ENCODE measurements at regions of chr18 and their contacts with region 1.

Region 1: DNA sequence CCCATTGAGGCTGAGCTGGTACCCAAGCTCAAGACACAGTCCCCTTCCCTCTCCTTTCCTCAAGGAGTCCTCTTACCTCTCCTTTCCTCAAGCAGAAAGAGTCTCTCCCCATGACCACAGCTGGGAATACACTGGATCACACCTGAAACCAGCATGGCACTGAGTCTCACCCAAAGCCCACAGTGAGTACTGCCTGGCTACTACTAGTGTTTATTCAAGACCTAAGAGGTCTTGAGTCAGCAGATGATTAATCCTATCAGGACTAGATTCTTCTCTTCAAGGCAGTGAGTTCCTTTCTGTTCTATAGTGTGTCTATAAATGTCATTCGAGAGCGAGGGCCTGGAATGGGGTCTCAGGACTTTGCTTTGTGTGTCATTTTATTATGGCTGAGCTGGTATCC is 111.4 kb downstream of the METTL4 start:
- DNase-seq: no peak
- ATAC-seq: no peak
- H3K4me3 Mint-ChIP-seq: no peak overlapping the region
- H3K27ac Mint-ChIP-seq: no peak overlapping the region
- H3K4me1 Mint-ChIP-seq: no peaks in the 10 kb centered on the region
- H3K27me3 Mint-ChIP-seq: peaks cover 3% of the 10 kb centered on the region

Region 2: GRCh38 chr18:2431806-2432205 is 28.1 kb before region 1 on chr18:
- CTCF ChIA-PET with region 1: no interaction called
- POLR2A ChIA-PET with region 1: no interaction called
- intact Hi-C with region 1: loop called in 1 of 2 experiments (anchors 2 kb)
- DNase-seq: no peak
- ATAC-seq: no peak
- H3K4me3 Mint-ChIP-seq: no peak overlapping the region
- H3K27ac Mint-ChIP-seq: no peak overlapping the region
- H3K4me1 Mint-ChIP-seq: no peaks in the 10 kb centered on the region
- H3K27me3 Mint-ChIP-seq: peaks cover 11% of the 10 kb centered on the region